Naive thymus-derived CD4-positive, alpha-beta T cell (primary cell): ENCODE measurements at regions of chr16 and their contacts with region 1.

Region 1: GRCh38 chr16:66984892-66985311 is 3.5 kb upstream of the CES4A start:
- DNase-seq: peak in 1 of 9 donors; percentile 70
- ATAC-seq: peak; percentile 26
- H3K4me3 ChIP-seq: no peak overlapping the region
- H3K4me3 Mint-ChIP-seq: peak overlapping the region in 4 of 10 donors; percentile 6 to 58 (median 22)
- H3K27ac ChIP-seq: peak overlapping the region; percentile 53
- H3K27ac Mint-ChIP-seq: peak overlapping the region; percentile 48 to 98 (median 83)
- H3K4me1 ChIP-seq: peaks cover 17 to 18% of the 10 kb centered on the region in 2 donors
- H3K4me1 Mint-ChIP-seq: peaks cover 6 to 67% (median 17%) of the 10 kb centered on the region in 7 donors
- H3K27me3 ChIP-seq: no peaks in the 10 kb centered on the region
- H3K27me3 Mint-ChIP-seq: no peaks in the 10 kb centered on the region

Region 2: GRCh38 chr16:67000384-67001351 is 15.8 kb after region 1 on chr16:
- CTCF ChIA-PET with region 1: interaction called, 4 read pairs
- POLR2A ChIA-PET with region 1: no interaction called
- intact Hi-C with region 1: loop called in 1 of 2 experiments (anchors 1 kb)
- DNase-seq: peak; percentile 39 to 73 (median 61)
- ATAC-seq: peak; percentile 81
- H3K4me3 ChIP-seq: peak overlapping the region; percentile 75
- H3K4me3 Mint-ChIP-seq: peak overlapping the region; percentile 65 to 88 (median 84)
- H3K27ac ChIP-seq: peak overlapping the region; percentile 72
- H3K27ac Mint-ChIP-seq: peak overlapping the region; percentile 68 to 89 (median 80)
- H3K4me1 ChIP-seq: peaks cover 4 to 9% of the 10 kb centered on the region in 2 donors
- H3K4me1 Mint-ChIP-seq: peaks cover 6 to 42% (median 14%) of the 10 kb centered on the region in 7 donors
- H3K27me3 ChIP-seq: no peaks in the 10 kb centered on the region
- H3K27me3 Mint-ChIP-seq: no peaks in the 10 kb centered on the region

Region 3: GRCh38 chr16:68676113-68676860 is 1691.4 kb after region 1 on chr16:
- CTCF ChIA-PET with region 1: no interaction called
- POLR2A ChIA-PET with region 1: no interaction called
- intact Hi-C with region 1: no loop called
- DNase-seq: no peak
- ATAC-seq: no peak
- H3K4me3 ChIP-seq: no peak overlapping the region
- H3K4me3 Mint-ChIP-seq: no peak overlapping the region
- H3K27ac ChIP-seq: no peak overlapping the region
- H3K27ac Mint-ChIP-seq: no peak overlapping the region
- H3K4me1 ChIP-seq: no peaks in the 10 kb centered on the region
- H3K4me1 Mint-ChIP-seq: no peaks in the 10 kb centered on the region
- H3K27me3 ChIP-seq: no peaks in the 10 kb centered on the region
- H3K27me3 Mint-ChIP-seq: peaks cover 0 to 5% (median 0%) of the 10 kb centered on the region in 5 donors